ENCODE measurements at regions of chr2 and their contacts with region 1.

Region 1: DNA sequence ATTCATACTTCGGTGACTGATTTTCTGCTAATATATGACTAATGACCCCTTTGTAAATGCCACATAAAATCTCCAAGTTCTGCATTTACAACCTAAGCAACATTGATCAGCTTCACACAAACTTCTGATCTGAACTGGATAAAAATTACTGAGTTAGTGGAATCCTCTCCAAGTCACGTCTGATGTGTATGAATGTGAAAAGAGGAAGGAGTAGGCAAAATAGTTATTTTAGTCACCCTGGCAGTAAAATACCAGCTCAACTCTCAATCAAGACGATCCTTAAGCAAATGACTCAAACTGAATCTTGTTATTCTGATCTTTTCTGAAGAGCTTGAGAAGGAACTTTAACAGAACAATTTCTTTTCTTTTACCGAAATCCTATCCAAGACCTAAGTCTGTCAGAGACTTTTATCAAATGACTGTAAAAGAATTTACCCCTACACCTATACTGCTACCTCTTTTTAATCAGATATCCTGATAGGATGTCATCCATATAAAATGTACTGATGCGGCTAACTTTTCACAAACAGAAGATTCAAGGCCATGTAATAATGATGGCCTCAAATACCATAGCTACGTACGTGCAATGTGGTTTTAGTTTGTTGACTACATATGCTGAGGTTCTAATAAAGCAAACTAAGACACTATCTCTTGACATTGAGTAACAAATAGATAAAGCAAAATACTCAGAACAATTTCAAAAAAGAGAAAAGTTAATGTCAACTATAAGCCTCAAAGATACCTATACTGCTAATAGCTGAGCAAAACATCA is 23.7 kb downstream of the CUL3 start:
- DNase-seq: peak; percentile 30
- H3K4me3 ChIP-seq: peak overlapping the region; percentile 1
- H3K27ac ChIP-seq: peak overlapping the region; percentile 34
- H3K4me1 ChIP-seq: peaks cover 42% of the 10 kb centered on the region
- CTCF ChIP-seq: no peak

Region 2: GRCh38 chr2:224545884-224546644 is 15.4 kb before region 1 on chr2:
- CTCF ChIA-PET with region 1: interaction called, 6 read pairs
- POLR2A ChIA-PET with region 1: interaction called, 22 read pairs
- intact Hi-C with region 1: no loop called
- DNase-seq: no peak
- H3K4me3 ChIP-seq: peak overlapping the region; percentile 44
- H3K27ac ChIP-seq: peak overlapping the region; percentile 51
- H3K4me1 ChIP-seq: peaks cover 37% of the 10 kb centered on the region
- CTCF ChIP-seq: no peak

Region 3: DNA sequence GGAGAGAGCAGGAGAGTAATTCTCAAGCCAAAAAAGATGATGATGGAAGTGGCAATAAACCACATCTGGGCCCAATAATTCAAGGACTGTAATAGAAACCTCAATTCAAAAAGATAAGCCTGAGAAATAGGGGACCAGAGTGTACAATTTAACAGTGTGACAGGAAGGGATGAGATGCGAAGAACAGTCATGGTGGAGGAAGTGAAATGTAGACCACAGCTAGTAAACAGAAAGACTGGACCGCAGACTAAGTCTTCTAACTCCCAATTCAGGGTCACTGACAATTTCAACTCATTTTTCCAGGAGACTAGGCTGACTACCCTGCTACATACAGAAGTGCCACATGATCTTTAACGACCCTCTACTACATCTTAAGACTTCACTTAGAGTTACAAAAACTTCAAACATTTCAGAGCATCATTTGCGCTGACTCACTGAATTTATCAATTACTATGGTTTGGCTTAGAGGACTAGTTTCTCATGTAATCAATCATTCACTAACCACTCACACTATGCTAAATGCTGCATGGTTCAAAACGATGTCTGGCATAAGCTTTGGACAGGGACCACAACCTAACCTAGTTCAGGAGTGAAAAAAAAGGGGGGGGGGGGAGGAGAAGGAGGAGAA is 14.8 kb after region 1 on chr2:
- CTCF ChIA-PET with region 1: interaction called, 3 read pairs
- POLR2A ChIA-PET with region 1: interaction called, 38 read pairs
- intact Hi-C with region 1: no loop called
- DNase-seq: peak; percentile 36
- H3K4me3 ChIP-seq: peak overlapping the region; percentile 45
- H3K27ac ChIP-seq: peak overlapping the region; percentile 54
- H3K4me1 ChIP-seq: peaks cover 100% of the 10 kb centered on the region
- CTCF ChIP-seq: no peak